Transverse colon (tissue), 4 donors: ENCODE measurements at regions of chr15 and their contacts with region 1.

Region 1: GRCh38 chr15:57312318-57313133 is 63.8 kb upstream of the CGNL1 start:
- DNase-seq: peak; percentile 84
- H3K4me3 ChIP-seq: no peak overlapping the region
- H3K27ac ChIP-seq: peak overlapping the region; percentile 74 to 84 (median 80)
- H3K4me1 ChIP-seq: peaks cover 0 to 38% (median 18%) of the 10 kb centered on the region in 4 donors
- H3K27me3 ChIP-seq: no peaks in the 10 kb centered on the region
- CTCF ChIP-seq: peak in 2 of 5 experiments; percentile 32 to 35
- EP300 ChIP-seq: no peak
- POLR2A ChIP-seq: no peak

Region 2: DNA sequence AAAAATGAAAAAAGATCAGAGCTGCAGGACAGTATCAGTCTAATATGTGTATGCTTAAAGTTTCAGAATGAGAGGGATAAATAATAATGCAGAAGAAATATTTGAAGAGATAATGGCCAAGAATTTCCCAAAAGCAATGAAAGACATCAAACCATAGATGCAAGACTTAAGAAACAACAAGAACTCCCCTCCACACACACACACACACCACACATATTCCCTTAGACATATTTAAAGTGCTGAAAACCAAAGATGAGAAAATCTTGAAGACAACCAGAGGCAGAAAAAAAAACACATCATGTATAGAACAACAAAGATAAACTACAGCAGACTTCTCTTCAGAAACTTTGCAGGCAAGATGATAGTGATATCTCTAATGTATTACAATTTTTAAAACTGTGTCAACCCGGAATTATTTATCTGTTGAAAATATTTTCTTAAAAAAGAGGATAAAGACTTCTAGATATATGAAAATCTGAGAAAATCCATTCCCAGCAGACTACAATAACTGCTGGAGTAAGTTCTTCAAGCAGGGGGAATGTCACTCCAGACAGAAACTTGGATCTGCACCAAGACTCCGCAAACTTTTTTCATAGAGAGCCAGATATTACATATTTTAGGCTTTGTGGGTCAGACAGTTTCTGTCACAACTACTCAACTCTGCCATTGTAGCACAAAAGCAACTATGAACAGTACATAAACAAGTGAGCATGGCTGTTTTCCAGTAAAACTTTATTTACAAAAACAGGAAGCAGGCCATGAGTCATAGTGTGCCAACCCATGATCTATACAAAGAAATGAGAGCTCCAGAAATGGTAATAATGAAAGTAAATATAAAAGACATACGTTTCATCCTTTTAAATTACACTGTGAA is 159.6 kb before region 1 on chr15:
- in situ Hi-C with region 1: loop called in 3 of 4 experiments (anchors 10 kb)
- intact Hi-C with region 1: loop called (anchors 5 kb)
- DNase-seq: no peak
- H3K4me3 ChIP-seq: no peak overlapping the region
- H3K27ac ChIP-seq: no peak overlapping the region
- H3K4me1 ChIP-seq: peaks cover 0 to 29% (median 8%) of the 10 kb centered on the region in 4 donors
- H3K27me3 ChIP-seq: no peaks in the 10 kb centered on the region
- CTCF ChIP-seq: no peak
- EP300 ChIP-seq: no peak
- POLR2A ChIP-seq: no peak

Region 3: GRCh38 chr15:57196865-57197264 is 115.7 kb before region 1 on chr15:
- in situ Hi-C with region 1: no loop called
- intact Hi-C with region 1: no loop called
- DNase-seq: no peak
- H3K4me3 ChIP-seq: no peak overlapping the region
- H3K27ac ChIP-seq: no peak overlapping the region
- H3K4me1 ChIP-seq: peaks cover 5 to 38% (median 11%) of the 10 kb centered on the region in 4 donors
- H3K27me3 ChIP-seq: no peaks in the 10 kb centered on the region
- CTCF ChIP-seq: no peak
- EP300 ChIP-seq: no peak
- POLR2A ChIP-seq: no peak

Region 4: DNA sequence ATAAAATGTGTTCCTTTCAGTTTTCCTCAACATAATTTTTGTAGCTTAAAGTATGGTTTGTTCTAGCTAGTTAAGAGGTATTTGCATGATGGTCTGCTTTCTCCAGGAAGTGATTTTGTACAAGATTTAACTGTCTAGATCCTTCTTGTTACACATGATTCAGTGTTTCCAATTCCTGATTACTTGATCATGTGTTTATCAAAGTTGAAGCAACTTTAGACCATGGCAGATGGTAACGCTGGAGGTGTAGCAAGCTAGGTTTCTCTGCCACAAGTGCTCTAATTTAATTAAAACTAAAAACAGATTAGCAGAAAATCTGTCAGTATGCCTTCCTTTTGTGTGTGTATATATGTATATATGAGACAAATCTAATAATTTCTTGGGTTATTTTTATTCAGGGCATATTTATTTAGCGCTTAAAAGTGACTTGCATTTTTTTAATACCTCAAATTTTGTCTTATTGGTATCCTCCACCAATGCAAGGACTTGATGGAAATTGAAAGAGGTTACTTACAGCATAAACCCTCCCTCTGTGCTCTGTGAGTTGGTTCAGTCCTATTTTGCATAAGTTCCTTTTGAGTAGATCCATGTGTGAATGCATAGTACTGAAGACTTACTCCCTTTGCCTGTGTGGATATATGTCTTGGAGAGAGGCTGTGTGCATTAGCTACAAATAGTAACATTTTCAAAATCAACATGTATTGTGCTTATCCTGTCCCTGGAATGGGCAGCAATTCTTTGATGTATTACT is 93.5 kb before region 1 on chr15:
- in situ Hi-C with region 1: no loop called
- intact Hi-C with region 1: no loop called
- DNase-seq: no peak
- H3K4me3 ChIP-seq: no peak overlapping the region
- H3K27ac ChIP-seq: no peak overlapping the region
- H3K4me1 ChIP-seq: peaks cover 6 to 44% (median 16%) of the 10 kb centered on the region in 4 donors
- H3K27me3 ChIP-seq: no peaks in the 10 kb centered on the region
- CTCF ChIP-seq: no peak
- EP300 ChIP-seq: no peak
- POLR2A ChIP-seq: no peak

Region 5: DNA sequence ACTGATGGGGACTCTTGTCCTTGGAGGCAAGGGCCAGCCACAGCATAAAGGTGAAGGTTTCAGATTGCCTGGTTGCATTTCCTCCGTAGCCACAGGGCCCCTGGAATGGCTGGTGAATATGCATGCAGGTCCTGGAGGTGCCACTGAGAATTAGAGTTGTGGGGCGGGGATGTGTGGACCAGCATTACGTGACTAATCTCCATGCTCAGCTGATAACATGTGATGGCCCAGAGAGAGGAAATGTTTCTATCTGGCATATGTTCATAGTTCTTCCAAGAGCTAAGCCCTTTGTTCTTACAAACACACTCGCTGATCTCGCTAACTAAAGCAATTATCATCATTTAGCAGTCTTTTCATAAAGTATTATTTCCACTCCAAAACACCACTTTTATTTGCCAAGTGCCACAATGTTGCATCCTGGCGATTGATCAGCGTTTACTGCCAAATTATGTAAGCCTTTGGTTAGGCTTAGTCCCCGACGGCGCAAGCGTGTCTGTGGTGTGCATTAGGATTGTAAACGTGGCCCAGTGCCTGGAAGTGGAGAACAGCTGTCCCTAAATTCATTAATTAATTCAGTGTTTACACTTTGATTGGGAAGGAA is 119.7 kb after region 1 on chr15:
- in situ Hi-C with region 1: no loop called
- intact Hi-C with region 1: no loop called
- DNase-seq: no peak
- H3K4me3 ChIP-seq: no peak overlapping the region
- H3K27ac ChIP-seq: no peak overlapping the region
- H3K4me1 ChIP-seq: peaks cover 0 to 20% (median 2%) of the 10 kb centered on the region in 4 donors
- H3K27me3 ChIP-seq: no peaks in the 10 kb centered on the region
- CTCF ChIP-seq: no peak
- EP300 ChIP-seq: no peak
- POLR2A ChIP-seq: no peak